Dorsolateral prefrontal cortex (tissue), 120 donors: ENCODE measurements at regions of chr16 and their contacts with region 1.

Region 1: DNA sequence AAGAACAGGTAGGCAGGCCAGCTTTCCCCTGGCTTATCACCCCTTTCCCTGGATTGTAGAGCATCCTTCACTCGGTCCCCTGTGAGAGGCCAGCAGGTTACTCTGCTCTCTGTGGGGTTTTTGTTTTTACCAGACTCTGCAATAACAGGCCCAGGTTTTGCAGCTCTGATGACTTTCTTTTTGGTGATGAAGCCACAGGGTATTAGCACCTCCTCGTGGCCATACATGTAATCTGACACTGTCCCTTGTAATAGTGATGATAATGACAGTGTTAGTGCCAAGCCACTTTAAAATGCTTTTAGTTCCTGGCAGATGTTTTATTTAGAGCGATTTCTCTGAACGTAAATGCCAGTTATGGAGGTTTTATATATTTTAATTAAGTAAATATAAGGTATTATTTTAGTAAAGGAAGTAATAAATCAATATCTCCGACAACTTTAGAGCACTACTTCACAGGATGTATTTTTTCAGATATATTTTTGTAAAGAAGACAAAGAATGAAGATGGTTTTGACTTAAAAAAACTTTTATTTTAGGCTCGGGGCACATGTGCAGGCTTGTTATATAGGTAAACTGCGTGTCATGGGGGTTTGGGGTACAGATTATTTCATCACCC is 38.0 kb upstream of the CPHXL start:
- DNase-seq: peak in 7 of 10 donors; percentile 36 to 80 (median 60)
- H3K4me3 ChIP-seq: peak overlapping the region in 15 of 59 donors; percentile 2 to 42 (median 18)
- H3K27ac ChIP-seq: peak overlapping the region in 38 of 59 donors; percentile 4 to 75 (median 49)
- H3K27me3 ChIP-seq: no peaks in the 10 kb centered on the region
- CTCF ChIP-seq: peak; percentile 62 to 93 (median 84)

Region 2: GRCh38 chr16:75198135-75198600 is 566.1 kb before region 1 on chr16:
- intact Hi-C with region 1: loop called in 1 of 2 experiments (anchors 5 kb)
- DNase-seq: peak in 4 of 10 donors; percentile 19 to 38 (median 26)
- H3K4me3 ChIP-seq: no peak overlapping the region
- H3K27ac ChIP-seq: no peak overlapping the region
- H3K27me3 ChIP-seq: peaks cover 0 to 10% (median 0%) of the 10 kb centered on the region in 45 donors
- CTCF ChIP-seq: no peak

Region 3: DNA sequence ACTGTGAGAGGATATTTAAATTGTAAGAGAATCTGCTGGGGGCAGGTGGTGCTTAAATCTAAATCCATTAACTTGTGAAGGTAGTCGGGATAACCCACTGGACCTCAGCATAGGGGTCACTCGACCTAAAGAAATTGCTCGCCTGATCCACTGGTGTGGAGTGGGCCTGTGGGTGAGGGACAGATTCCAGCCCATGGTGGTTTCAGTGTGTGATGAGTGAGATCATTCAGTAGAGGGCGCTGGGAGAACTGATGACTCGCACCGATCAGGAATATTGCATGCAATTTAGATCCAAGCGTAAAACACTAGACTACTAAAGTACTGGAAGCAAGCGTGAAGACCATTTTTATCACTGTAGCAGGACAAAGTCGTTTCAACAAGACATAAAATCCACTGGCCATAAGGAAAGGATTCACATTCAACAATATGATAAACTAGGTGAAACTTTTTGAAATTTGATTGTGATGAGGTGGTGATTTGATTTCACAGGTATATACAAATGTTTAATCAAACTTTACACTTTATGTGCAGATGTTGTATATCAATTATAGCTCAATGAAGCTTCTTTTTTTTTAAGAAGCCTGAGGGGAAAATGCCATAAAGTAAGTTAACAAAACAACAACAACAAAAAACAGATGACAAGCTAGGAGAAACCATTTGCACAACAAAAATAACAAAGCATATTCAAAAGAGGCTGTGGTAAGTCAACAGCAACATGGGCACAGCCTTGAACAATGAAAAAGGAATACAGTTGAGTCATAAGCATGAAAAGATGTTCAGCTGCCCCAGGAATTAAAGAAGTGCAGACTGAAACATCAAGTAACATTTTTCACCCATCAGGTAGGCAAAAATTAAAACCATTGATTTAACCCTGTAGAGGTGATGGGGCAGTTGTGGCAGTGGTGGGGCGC is 292.3 kb before region 1 on chr16:
- intact Hi-C with region 1: loop called (anchors 10 kb)
- DNase-seq: peak; percentile 33 to 81 (median 70)
- H3K4me3 ChIP-seq: no peak overlapping the region
- H3K27ac ChIP-seq: peak overlapping the region in 14 of 59 donors; percentile 0 to 73 (median 42)
- H3K27me3 ChIP-seq: no peaks in the 10 kb centered on the region
- CTCF ChIP-seq: peak; percentile 53 to 94 (median 83)

Region 4: DNA sequence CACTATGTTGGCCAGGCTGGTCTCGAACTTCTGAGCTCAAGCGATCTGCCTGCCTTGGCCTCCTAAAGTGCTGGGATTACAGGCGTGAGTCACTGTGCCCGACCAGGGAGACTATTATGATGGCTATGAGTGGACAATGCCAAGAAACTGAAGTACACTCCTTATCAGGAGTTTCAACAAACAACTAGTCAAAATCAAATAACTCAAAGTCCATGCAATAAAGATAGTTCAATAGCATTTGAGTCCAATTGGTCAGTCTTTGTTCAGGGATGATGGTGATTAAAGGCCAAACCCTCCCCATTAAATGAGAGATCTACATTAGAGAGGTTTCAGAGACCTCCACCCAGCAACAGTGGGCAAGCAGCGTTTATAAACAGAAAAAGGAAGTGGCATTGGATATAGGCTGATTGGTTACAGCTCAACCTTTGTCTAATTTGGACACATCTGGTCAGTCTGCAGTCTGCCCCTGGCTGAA is 236.4 kb before region 1 on chr16:
- intact Hi-C with region 1: no loop called
- DNase-seq: no peak
- H3K4me3 ChIP-seq: no peak overlapping the region
- H3K27ac ChIP-seq: no peak overlapping the region
- H3K27me3 ChIP-seq: no peaks in the 10 kb centered on the region
- CTCF ChIP-seq: no peak

Region 5: GRCh38 chr16:75555707-75556430 is 208.4 kb before region 1 on chr16 and contains the start of gene TMEM231:
- intact Hi-C with region 1: loop called in 1 of 2 experiments (anchors 10 kb)
- DNase-seq: peak; percentile 95 to 99 (median 98)
- H3K4me3 ChIP-seq: peak within 1 kb of the TSS; percentile 65 to 99 (median 87)
- H3K27ac ChIP-seq: peak within 1 kb of the TSS; percentile 35 to 93 (median 85)
- H3K27me3 ChIP-seq: no peaks in the 10 kb centered on the region
- CTCF ChIP-seq: peak in 31 of 56 donors; percentile 7 to 49 (median 28)
- total RNA-seq, gene TMEM231: 16.2 to 36.0 (median 24.0) TPM

Region 6: DNA sequence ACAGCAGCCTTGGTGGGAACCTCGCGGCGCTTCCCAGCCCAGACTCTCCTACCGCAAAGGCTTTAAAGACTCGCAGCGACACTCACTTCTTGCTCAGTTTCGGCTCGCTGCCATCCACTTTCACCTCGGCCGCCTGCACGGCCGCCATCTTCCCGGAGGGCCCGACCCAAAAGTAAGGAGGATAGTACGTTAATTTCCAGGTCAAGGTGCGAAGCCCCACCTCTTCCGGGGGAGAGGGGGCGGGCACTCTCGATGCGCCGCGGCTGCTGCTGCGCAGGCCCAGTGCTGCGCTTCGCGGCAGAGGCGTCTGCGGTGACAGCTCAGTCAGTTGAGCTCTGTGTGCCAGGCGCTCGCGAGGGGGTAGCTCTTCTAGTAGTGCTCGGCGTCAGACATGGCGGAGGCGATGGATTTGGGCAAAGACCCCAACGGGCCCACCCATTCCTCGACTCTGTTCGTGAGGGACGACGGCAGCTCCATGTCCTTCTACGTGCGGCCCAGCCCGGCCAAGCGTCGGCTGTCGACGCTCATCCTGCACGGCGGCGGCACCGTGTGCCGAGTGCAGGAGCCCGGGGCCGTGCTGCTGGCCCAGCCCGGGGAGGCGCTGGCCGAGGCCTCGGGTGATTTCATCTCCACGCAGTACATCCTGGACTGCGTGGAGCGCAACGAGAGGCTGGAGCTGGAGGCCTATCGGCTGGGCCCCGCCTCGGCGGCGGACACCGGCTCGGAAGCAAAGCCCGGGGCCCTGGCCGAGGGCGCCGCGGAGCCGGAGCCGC is 116.6 kb before region 1 on chr16 and contains the starts of genes KARS1 and TERF2IP:
- intact Hi-C with region 1: loop called (anchors 5 kb)
- DNase-seq: peak; percentile 90 to 97 (median 94)
- H3K4me3 ChIP-seq: peak within 1 kb of the TSS; percentile 76 to 100 (median 97)
- H3K27ac ChIP-seq: peak within 1 kb of the TSS; percentile 92 to 100 (median 99)
- H3K27me3 ChIP-seq: no peaks in the 10 kb centered on the region
- CTCF ChIP-seq: peak in 23 of 56 donors; percentile 7 to 48 (median 27)
- total RNA-seq, gene KARS1: 39.4 to 84.1 (median 60.8) TPM
- total RNA-seq, gene TERF2IP: 104 to 284 (median 207) TPM